ENCODE measurements at regions of chr17 and their contacts with region 1.

Region 1: DNA sequence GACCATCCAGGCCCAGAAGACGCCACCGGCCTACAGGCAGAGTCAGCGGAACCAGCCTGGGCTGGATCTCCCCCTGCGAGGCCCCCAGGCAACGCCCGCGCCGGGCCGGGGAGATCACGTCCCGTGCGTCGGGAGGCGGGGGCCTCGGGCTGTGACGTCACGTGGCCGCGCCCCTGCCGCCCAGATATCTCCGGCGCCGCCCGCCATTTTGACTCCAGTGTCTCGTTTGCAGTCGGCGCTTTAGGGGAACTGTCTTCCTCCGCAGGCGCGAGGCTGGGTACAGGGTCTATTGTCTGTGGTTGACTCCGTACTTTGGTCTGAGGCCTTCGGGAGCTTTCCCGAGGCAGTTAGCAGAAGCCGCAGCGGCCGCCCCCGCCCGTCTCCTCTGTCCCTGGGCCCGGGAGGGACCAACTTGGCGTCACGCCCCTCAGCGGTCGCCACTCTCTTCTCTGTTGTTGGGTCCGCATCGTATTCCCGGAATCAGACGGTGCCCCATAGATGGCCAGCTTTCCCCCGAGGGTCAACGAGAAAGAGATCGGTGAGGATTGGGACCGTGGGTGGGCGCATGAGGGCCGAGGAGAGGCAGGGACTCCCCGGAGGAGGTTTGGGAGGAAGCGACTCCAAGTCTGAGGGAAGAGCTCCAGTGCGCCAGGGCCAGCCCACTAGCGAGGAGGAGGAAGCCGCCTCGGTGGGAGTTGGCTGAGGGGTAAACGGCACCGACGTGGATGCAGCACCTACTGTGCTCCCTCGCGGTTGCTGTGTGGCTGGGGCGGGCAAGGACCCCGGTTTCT is at the start of gene WSB1:
- DNase-seq: peak; percentile 47 to 94
- H3K4me3 ChIP-seq: peak within 1 kb of the TSS; percentile 96 to 100 (median 99)
- H3K27ac ChIP-seq: peak within 1 kb of the TSS; percentile 95
- H3K4me1 ChIP-seq: peaks cover 0 to 8% (median 4%) of the 10 kb centered on the region in 4 experiments; a peak in 6 of 7 replicates
- H3K27me3 ChIP-seq: no peaks in the 10 kb centered on the region
- CTCF ChIP-seq: no peak
- EP300 ChIP-seq: no peak
- POLR2A ChIP-seq: peak; percentile 93 to 96
- RAD21 ChIP-seq: no peak
- total RNA-seq, gene WSB1: 101 and 113 TPM in 2 replicates

Region 2: DNA sequence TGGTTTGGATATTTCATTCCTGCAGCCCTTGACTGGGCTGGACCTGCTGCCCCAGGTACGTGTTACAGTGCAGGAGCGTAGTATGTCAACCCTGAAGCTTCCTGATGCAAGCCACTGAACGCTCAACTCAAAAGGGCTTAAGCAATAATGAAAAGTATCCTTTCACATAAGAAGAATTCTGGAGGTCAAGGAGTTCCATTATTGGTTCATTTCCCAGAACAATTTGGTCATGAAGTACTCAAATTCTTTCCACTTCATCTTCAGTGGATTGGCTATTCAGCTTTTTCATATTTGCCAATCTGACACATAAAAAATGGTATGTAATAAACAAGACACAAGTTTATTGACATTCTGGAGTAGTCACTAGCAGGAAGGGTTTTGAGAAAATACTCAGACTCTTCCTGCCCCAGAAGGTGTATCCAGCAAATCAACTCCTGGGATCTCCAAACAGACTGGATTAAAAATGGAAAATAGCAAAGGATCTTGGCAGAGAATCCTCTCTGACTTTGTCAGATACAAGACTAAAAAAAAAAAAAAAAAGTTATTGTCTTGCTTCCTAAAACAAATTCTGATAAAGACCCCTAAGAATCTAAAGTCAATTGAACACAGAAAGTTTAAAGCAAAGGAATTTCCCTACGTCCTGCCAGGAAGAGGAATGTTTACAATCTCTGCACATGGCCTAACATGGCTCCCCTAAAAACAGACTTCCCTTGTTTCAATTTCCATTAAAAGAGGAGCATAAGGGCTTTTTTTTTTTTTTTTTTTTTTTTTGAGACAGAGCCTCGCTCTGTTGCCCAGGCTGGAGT is 37.7 kb before region 1 on chr17:
- CTCF ChIA-PET with region 1: interaction called, 3 read pairs
- POLR2A ChIA-PET with region 1: interaction called, 10 read pairs
- DNase-seq: no peak
- H3K4me3 ChIP-seq: no peak overlapping the region
- H3K27ac ChIP-seq: no peak overlapping the region
- H3K4me1 ChIP-seq: no peaks in the 10 kb centered on the region
- H3K27me3 ChIP-seq: no peaks in the 10 kb centered on the region
- CTCF ChIP-seq: no peak
- EP300 ChIP-seq: no peak
- POLR2A ChIP-seq: no peak
- RAD21 ChIP-seq: no peak

Region 3: GRCh38 chr17:27276653-27277156 is 17.4 kb before region 1 on chr17:
- CTCF ChIA-PET with region 1: interaction called, 8 read pairs
- POLR2A ChIA-PET with region 1: interaction called, 46 read pairs
- DNase-seq: peak; percentile 50 to 77
- H3K4me3 ChIP-seq: peak overlapping the region in 3 of 4 experiments; percentile 2 to 52 (median 50); a peak in 4 of 8 replicates
- H3K27ac ChIP-seq: peak overlapping the region; percentile 93
- H3K4me1 ChIP-seq: peaks cover 0 to 4% (median 2%) of the 10 kb centered on the region in 4 experiments; a peak in 3 of 7 replicates
- H3K27me3 ChIP-seq: no peaks in the 10 kb centered on the region; a peak in 1 of 7 replicates
- CTCF ChIP-seq: no peak
- EP300 ChIP-seq: no peak
- POLR2A ChIP-seq: peak; percentile 57 to 88
- RAD21 ChIP-seq: no peak

Region 4: DNA sequence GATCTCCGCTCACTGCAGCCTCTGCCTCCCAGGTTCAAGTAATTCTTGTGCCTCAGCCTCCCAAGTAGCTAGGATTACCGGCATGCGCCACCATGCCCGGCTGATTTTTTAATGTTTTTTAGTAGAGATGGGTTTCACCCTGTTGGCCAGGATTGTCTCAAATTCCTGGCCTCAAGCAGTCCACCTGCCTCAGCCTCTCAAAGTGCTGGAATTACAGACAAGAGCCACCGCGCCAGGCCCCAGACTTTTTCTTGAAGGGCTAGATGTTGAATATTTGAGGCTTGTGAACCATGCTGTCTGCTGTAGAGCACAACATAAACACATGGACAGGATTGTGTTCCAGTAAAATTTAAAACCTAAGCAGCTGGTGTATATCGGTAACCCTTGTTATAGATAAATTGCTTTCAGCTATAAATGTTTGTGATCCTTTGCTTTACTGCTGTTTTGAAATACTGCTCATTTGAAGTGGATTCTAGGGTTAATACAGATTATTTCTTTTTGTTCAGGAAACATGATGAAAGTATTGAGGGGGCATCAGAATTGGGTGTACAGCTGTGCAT is 12.3 kb after region 1 on chr17:
- CTCF ChIA-PET with region 1: interaction called, 4 read pairs
- POLR2A ChIA-PET with region 1: interaction called, 33 read pairs
- DNase-seq: no peak
- H3K4me3 ChIP-seq: no peak overlapping the region
- H3K27ac ChIP-seq: no peak overlapping the region
- H3K4me1 ChIP-seq: no peaks in the 10 kb centered on the region
- H3K27me3 ChIP-seq: no peaks in the 10 kb centered on the region
- CTCF ChIP-seq: no peak
- EP300 ChIP-seq: no peak
- POLR2A ChIP-seq: no peak
- RAD21 ChIP-seq: no peak

Region 5: DNA sequence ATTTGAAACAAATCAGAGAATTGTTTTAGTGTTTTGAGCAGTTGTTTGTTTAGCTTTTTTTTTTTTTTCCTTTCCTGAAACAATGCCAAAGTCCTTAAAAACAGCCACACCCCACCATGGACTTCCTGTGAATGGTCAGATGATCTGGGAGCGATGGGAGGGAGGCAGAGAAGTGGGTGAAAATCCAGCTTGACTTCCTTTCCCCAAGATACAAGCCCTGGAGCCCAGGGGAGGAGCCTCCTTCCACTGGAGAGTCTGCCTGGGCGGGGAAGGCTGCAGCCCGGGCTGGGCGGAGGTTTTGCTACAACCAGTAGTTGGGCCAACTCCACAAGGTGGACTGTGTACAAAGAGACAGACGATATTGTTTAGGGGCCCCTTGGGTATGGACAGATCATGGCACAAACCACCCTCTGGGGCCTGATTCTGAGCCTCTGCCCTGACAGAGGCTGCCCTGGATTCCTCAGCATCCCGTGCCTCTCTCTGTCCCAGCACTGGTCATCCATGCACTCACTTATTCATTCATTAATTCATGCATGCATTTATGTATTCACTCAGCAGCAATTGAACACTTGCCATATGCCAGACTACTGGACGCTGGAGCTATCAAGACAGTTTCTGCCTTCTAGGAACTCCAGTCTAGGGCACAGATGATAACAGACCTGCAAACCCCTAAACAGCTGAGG is 29.6 kb after region 1 on chr17:
- CTCF ChIA-PET with region 1: interaction called, 4 read pairs
- POLR2A ChIA-PET with region 1: interaction called, 33 read pairs
- DNase-seq: peak in 1 of 2 experiments; percentile 53
- H3K4me3 ChIP-seq: no peak overlapping the region
- H3K27ac ChIP-seq: no peak overlapping the region
- H3K4me1 ChIP-seq: peaks cover 0 to 1% (median 0%) of the 10 kb centered on the region in 4 experiments; a peak in 1 of 7 replicates
- H3K27me3 ChIP-seq: no peaks in the 10 kb centered on the region
- CTCF ChIP-seq: no peak
- EP300 ChIP-seq: no peak
- POLR2A ChIP-seq: no peak
- RAD21 ChIP-seq: no peak

Region 6: DNA sequence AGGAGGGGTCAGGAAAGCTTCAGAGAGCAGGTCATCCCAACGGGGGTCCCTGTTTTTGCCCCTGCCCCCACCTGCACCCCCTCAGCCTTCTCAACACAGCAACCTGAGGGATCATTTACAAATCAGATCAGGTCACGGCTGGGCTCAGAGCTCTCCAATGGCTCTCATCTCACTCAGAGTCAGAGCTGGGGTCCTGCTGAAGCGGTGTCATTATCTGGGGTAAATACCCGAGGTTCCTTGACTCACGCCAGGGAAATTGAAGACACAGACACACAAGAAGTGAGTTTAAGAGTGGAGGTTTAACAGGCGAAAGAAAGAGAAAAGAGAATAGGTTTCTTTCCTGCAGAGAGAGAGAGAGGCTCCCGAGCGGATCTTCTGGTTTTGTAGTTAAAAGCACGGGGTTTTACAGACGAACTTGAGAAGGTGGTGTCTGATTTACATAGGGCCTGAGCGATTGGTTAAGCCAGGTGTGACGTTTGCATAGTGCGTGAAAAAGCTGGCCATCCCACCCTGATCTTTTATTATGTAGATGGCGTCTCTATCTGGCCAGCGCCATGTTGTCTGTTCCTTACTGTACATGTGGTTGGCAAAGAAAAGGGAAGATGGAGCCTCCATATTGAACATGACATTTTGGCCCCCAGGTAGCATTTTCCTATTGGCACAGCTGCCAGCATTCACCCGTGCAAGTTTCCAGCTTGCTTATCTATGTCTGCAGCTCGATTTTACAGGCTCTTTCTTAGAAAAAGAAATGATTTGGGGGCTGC is 51.2 kb after region 1 on chr17:
- CTCF ChIA-PET with region 1: no interaction called
- POLR2A ChIA-PET with region 1: interaction called, 63 read pairs
- DNase-seq: peak; percentile 74 to 81
- H3K4me3 ChIP-seq: peak overlapping the region; percentile 28 to 62 (median 41); a peak in 6 of 8 replicates
- H3K27ac ChIP-seq: peak overlapping the region; percentile 95
- H3K4me1 ChIP-seq: peaks cover 8 to 16% (median 12%) of the 10 kb centered on the region in 4 experiments
- H3K27me3 ChIP-seq: no peaks in the 10 kb centered on the region
- CTCF ChIP-seq: no peak
- EP300 ChIP-seq: peak in 1 of 2 experiments; percentile 67; a peak in 1 of 3 replicates
- POLR2A ChIP-seq: peak; percentile 66 to 94
- RAD21 ChIP-seq: peak in 1 of 2 experiments; percentile 8; a peak in 1 of 4 replicates

Region 7: DNA sequence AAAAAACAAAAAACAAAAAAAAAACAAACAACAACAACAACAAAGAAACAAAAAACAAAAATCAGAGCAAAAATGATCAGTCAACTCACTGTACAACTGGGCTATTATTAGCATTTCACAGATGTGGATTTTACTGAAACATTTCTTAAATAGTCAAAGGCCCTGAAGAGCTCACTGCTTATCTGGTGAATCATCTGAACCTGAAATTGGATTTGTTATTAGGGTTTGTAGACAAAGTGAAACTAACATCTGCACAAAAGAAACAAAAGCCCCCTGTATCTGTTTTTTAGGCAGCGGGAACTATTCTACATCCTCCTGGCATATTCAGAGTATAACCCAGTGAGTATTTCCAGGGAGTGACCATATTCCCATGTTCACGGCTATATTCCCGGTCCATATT is 129.6 kb after region 1 on chr17:
- CTCF ChIA-PET with region 1: no interaction called
- POLR2A ChIA-PET with region 1: no interaction called
- DNase-seq: no peak
- H3K4me3 ChIP-seq: no peak overlapping the region
- H3K27ac ChIP-seq: no peak overlapping the region
- H3K4me1 ChIP-seq: no peaks in the 10 kb centered on the region; a peak in 1 of 7 replicates
- H3K27me3 ChIP-seq: no peaks in the 10 kb centered on the region; a peak in 1 of 7 replicates
- CTCF ChIP-seq: no peak
- EP300 ChIP-seq: no peak
- POLR2A ChIP-seq: no peak
- RAD21 ChIP-seq: no peak